CD8-positive, alpha-beta T cell (primary cell): ENCODE measurements at regions of chr12 and their contacts with region 1.

Region 1: GRCh38 chr12:93569656-93570551 is 2.6 kb upstream of the SOCS2 start:
- DNase-seq: peak; percentile 39 to 86 (median 73)
- ATAC-seq: peak; percentile 47
- H3K4me3 ChIP-seq: peak overlapping the region; percentile 94 to 96
- H3K4me3 Mint-ChIP-seq: peak overlapping the region; percentile 93
- H3K27ac ChIP-seq: peak overlapping the region; percentile 72 to 79
- H3K27ac Mint-ChIP-seq: peak overlapping the region; percentile 90
- H3K4me1 ChIP-seq: peaks cover 17% of the 10 kb centered on the region
- H3K4me1 Mint-ChIP-seq: peaks cover 28% of the 10 kb centered on the region
- H3K27me3 ChIP-seq: no peaks in the 10 kb centered on the region
- H3K27me3 Mint-ChIP-seq: peaks cover 2% of the 10 kb centered on the region
- CTCF ChIP-seq: peak; percentile 64

Region 2: DNA sequence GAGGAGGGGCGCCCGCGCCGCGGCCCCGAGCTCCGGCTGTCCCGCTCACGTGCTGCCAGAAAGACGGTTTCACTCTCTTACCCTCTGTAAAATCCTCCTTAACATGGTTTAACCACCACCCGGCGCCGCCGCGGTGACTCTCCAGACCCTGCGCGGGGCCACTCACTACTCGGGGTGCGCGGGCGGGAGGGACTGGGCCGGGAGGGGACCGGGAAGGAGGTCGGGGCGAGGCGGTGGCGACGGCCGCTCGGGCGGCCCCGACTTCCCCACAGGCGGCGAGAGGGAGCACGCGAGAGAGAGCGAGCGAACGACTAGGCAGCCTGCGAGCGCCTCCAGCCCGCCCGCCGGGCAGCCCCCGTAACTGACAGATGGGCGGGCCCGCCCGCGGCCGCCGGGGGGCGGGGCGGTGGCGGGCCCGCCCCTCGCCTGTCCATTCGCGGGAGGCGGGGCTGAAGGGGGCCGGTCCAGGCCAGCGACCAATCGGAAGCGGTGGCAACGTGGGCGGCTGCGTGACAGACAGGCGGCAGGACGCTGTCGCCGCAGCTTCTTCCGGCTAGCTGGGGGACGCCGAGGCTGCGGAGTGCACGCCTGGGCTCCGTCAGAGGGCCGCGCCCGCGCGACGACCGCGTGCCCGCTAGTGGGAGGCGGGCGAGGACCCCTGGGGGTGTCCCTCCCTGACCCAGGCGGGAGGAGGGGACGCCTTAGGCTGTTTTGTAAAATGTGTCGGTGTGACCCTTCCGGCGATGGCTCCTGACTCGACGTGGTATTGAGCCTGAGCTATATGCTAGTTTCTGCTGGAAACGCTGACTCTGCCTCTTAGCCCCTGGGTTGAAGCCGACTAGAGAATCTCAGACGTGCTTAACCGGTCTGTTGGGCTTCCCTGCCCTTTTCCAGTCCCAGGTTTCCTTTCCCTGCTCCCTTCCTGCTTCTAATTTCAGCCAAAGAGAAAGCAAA is 640.7 kb before region 1 on chr12 and contains the start of gene EEA1:
- CTCF ChIA-PET with region 1: no interaction called
- POLR2A ChIA-PET with region 1: no interaction called
- intact Hi-C with region 1: loop called in 1 of 2 experiments (anchors 5 kb)
- DNase-seq: peak; percentile 88 to 97 (median 95)
- ATAC-seq: peak; percentile 84
- H3K4me3 ChIP-seq: peak within 1 kb of the TSS; percentile 71 to 78
- H3K4me3 Mint-ChIP-seq: peak within 1 kb of the TSS; percentile 85
- H3K27ac ChIP-seq: peak within 1 kb of the TSS; percentile 85 to 90
- H3K27ac Mint-ChIP-seq: peak within 1 kb of the TSS; percentile 95
- H3K4me1 ChIP-seq: peaks cover 26% of the 10 kb centered on the region
- H3K4me1 Mint-ChIP-seq: peaks cover 40% of the 10 kb centered on the region
- H3K27me3 ChIP-seq: no peaks in the 10 kb centered on the region
- H3K27me3 Mint-ChIP-seq: no peaks in the 10 kb centered on the region
- CTCF ChIP-seq: no peak
- total RNA-seq, gene EEA1: 4.3 to 6.9 TPM

Region 3: GRCh38 chr12:93467351-93468007 is 102.4 kb before region 1 on chr12 and contains the start of gene MRPL42:
- CTCF ChIA-PET with region 1: no interaction called
- POLR2A ChIA-PET with region 1: no interaction called
- intact Hi-C with region 1: loop called in 1 of 2 experiments (anchors 1 kb)
- DNase-seq: peak; percentile 88 to 96 (median 91)
- ATAC-seq: peak; percentile 94
- H3K4me3 ChIP-seq: peak within 1 kb of the TSS; percentile 64 to 95
- H3K4me3 Mint-ChIP-seq: peak within 1 kb of the TSS; percentile 93
- H3K27ac ChIP-seq: peak within 1 kb of the TSS; percentile 81 to 88
- H3K27ac Mint-ChIP-seq: peak within 1 kb of the TSS; percentile 95
- H3K4me1 ChIP-seq: peaks cover 15% of the 10 kb centered on the region
- H3K4me1 Mint-ChIP-seq: peaks cover 34% of the 10 kb centered on the region
- H3K27me3 ChIP-seq: no peaks in the 10 kb centered on the region
- H3K27me3 Mint-ChIP-seq: no peaks in the 10 kb centered on the region
- CTCF ChIP-seq: peak; percentile 71
- total RNA-seq, gene MRPL42: 31.6 to 33.2 TPM

Region 4: GRCh38 chr12:93742110-93742934 is 172.4 kb after region 1 on chr12:
- CTCF ChIA-PET with region 1: interaction called, 14 read pairs
- POLR2A ChIA-PET with region 1: no interaction called
- intact Hi-C with region 1: loop called (anchors 1 to 2 kb)
- DNase-seq: peak; percentile 10 to 72 (median 45)
- ATAC-seq: peak; percentile 87
- H3K4me3 ChIP-seq: peak overlapping the region; percentile 56 to 76
- H3K4me3 Mint-ChIP-seq: peak overlapping the region; percentile 91
- H3K27ac ChIP-seq: peak overlapping the region; percentile 34 to 47
- H3K27ac Mint-ChIP-seq: peak overlapping the region; percentile 79
- H3K4me1 ChIP-seq: peaks cover 8% of the 10 kb centered on the region
- H3K4me1 Mint-ChIP-seq: peaks cover 28% of the 10 kb centered on the region
- H3K27me3 ChIP-seq: no peaks in the 10 kb centered on the region
- H3K27me3 Mint-ChIP-seq: no peaks in the 10 kb centered on the region
- CTCF ChIP-seq: no peak

Region 5: GRCh38 chr12:94074980-94075928 is 505.4 kb after region 1 on chr12:
- CTCF ChIA-PET with region 1: interaction called, 16 read pairs
- POLR2A ChIA-PET with region 1: interaction called, 3 read pairs
- intact Hi-C with region 1: loop called in 1 of 2 experiments (anchors 1 kb)
- DNase-seq: peak in 2 of 9 experiments; percentile 13 to 38
- ATAC-seq: no peak
- H3K4me3 ChIP-seq: no peak overlapping the region
- H3K4me3 Mint-ChIP-seq: no peak overlapping the region
- H3K27ac ChIP-seq: no peak overlapping the region
- H3K27ac Mint-ChIP-seq: no peak overlapping the region
- H3K4me1 ChIP-seq: peaks cover 6% of the 10 kb centered on the region
- H3K4me1 Mint-ChIP-seq: peaks cover 15% of the 10 kb centered on the region
- H3K27me3 ChIP-seq: no peaks in the 10 kb centered on the region
- H3K27me3 Mint-ChIP-seq: peaks cover 10% of the 10 kb centered on the region
- CTCF ChIP-seq: peak; percentile 17